ENCODE measurements at regions of chr10 and their contacts with region 1.

Region 1: DNA sequence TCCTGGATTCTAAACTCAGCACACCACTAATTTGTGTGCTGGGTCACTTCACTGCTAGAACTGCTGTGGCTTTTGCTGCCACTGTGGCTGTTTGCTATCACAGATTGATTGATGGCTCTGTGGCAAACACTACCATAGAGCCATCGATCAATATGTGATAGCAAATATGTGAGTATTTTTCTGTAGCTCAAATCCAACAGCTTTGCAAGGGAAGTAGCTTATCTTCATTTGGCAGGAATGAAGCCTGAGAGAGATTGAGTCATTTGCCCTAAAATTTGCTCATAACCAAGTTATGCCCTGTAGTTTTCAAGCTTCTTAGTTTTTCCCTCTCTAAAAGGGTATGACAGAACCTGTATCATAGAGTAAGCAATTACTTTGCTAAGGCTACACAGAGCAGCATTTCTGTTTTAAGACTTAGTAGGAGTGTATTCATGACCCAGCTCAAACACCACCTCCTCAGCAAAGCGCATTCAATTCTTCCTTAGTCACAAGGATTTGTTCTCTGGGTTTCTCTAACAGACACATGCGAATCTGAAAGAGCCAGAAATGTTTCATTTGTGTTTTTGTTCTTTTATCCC is 43.1 kb downstream of the MINPP1 start:
- DNase-seq: peak; percentile 91
- ATAC-seq: peak; percentile 71
- H3K4me3 ChIP-seq: no peak overlapping the region
- H3K27ac ChIP-seq: peak overlapping the region; percentile 82
- H3K4me1 ChIP-seq: peaks cover 28% of the 10 kb centered on the region
- H3K27me3 ChIP-seq: no peaks in the 10 kb centered on the region
- CTCF ChIP-seq: no peak
- POLR2A ChIP-seq: no peak
- RAD21 ChIP-seq: 0 out of 2 replicates have a peak, but pooled peaks have one; percentile 9

Region 2: DNA sequence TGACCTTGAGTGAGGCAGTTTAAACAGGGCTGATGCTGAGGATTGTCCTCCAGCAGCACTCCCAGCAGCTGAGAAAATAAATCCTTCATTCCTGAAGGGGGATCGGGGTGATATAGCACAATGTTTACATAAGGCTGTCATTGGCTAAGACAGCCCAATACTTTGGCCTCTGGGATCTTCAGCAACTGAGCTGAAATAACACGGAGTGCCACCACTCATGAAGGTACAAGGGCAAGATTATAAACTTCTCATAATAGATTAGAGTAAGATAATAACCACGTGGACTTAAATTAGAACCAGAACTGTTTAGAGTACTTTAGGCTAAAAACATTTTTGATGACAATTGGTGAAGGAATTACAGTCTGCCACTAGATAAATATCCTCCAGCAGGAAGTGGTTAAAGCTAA is 41.8 kb after region 1 on chr10:
- CTCF ChIA-PET with region 1: no interaction called
- POLR2A ChIA-PET with region 1: no interaction called
- dilution Hi-C with region 1: no loop called
- in situ Hi-C with region 1: no loop called
- intact Hi-C with region 1: loop called (anchors 5 kb)
- DNase-seq: peak; percentile 74
- ATAC-seq: peak; percentile 78
- H3K4me3 ChIP-seq: no peak overlapping the region
- H3K27ac ChIP-seq: no peak overlapping the region
- H3K4me1 ChIP-seq: peaks cover 11% of the 10 kb centered on the region
- H3K27me3 ChIP-seq: peaks cover under 1% of the 10 kb centered on the region; the same call in 1 of the 2 replicates
- CTCF ChIP-seq: no peak
- POLR2A ChIP-seq: no peak
- RAD21 ChIP-seq: no peak

Region 3: GRCh38 chr10:87605628-87606308 is 57.9 kb after region 1 on chr10:
- CTCF ChIA-PET with region 1: no interaction called
- POLR2A ChIA-PET with region 1: no interaction called
- dilution Hi-C with region 1: no loop called
- in situ Hi-C with region 1: loop called (anchors 10 kb)
- intact Hi-C with region 1: no loop called
- DNase-seq: no peak
- ATAC-seq: no peak
- H3K4me3 ChIP-seq: no peak overlapping the region
- H3K27ac ChIP-seq: no peak overlapping the region
- H3K4me1 ChIP-seq: no peaks in the 10 kb centered on the region
- H3K27me3 ChIP-seq: no peaks in the 10 kb centered on the region
- CTCF ChIP-seq: no peak
- POLR2A ChIP-seq: no peak
- RAD21 ChIP-seq: no peak

Region 4: GRCh38 chr10:87734987-87735827 is 187.4 kb after region 1 on chr10:
- CTCF ChIA-PET with region 1: no interaction called
- POLR2A ChIA-PET with region 1: no interaction called
- dilution Hi-C with region 1: no loop called
- in situ Hi-C with region 1: loop called (anchors 10 kb)
- intact Hi-C with region 1: no loop called
- DNase-seq: peak; percentile 51
- ATAC-seq: peak; percentile 89
- H3K4me3 ChIP-seq: no peak overlapping the region
- H3K27ac ChIP-seq: no peak overlapping the region
- H3K4me1 ChIP-seq: peaks cover 4% of the 10 kb centered on the region; the same call in 1 of the 2 replicates
- H3K27me3 ChIP-seq: no peaks in the 10 kb centered on the region
- CTCF ChIP-seq: peak; percentile 80
- POLR2A ChIP-seq: no peak
- RAD21 ChIP-seq: peak; percentile 80